HepG2 (cell line): ENCODE measurements at regions of chr2 and their contacts with region 1.

Region 1: GRCh38 chr2:209960676-209961630 is 41.5 kb upstream of the RPE start:
- DNase-seq: peak; percentile 67
- ATAC-seq: peak; percentile 98
- H3K4me3 ChIP-seq: no peak overlapping the region
- H3K27ac ChIP-seq: no peak overlapping the region
- H3K4me1 ChIP-seq: no peaks in the 10 kb centered on the region
- H3K27me3 ChIP-seq: 0 out of 5 replicates have a peak, but pooled peaks cover 0 to 12% of the 10 kb centered on the region in 2 experiments
- CTCF ChIP-seq: peak; percentile 85
- EP300 ChIP-seq: no peak
- POLR2A ChIP-seq: no peak
- RAD21 ChIP-seq: peak; percentile 45; the same call in 1 of the 2 replicates

Region 2: DNA sequence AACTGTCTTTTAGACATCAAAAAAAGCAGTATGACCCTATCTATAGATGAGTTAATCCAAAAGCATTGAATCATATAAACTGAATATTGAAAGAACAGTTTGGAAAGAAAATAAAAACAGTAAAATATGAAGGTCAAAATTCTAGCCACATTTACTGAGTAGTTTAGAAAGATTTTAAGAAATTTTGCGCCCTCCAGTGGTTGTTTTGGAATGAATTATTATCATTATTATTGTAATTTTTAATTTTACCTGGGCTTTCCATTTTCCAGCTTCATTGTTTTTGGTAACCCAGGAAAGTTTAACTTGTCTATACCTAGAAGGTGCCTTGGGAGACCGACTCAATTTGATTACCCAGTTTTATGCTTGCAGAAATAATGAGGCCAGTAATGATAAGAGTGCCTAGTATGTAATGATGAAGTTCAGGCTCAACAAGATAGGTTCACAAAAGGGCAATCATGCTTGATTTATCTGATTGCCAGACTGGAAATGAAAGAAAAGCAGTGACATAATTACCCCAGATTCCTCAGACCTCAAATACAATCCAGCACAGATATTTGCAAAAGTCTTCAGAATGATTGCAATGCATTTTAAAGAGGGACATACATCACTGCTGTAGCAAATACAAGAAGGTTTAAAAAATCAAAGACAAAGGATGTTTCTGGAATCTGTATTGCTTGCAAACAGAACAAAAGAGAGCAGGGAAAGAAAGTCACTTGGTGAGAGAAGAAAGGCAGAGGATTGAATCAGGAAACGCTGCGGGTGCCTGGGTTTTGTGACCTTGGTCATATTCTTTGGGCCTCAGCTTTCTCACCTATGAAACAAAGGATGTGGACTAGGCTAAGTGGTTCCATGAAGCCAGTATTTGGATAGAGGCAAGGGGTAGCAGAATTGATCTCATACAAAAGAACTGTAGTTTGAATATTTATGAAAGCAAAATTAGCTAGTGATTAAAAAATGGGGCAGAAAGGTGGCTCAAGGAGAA is 383.3 kb before region 1 on chr2:
- CTCF ChIA-PET with region 1: no interaction called
- POLR2A ChIA-PET with region 1: no interaction called
- in situ Hi-C with region 1: no loop called
- intact Hi-C with region 1: loop called (anchors 10 kb)
- DNase-seq: peak; percentile 10
- ATAC-seq: no peak
- H3K4me3 ChIP-seq: no peak overlapping the region
- H3K27ac ChIP-seq: no peak overlapping the region
- H3K4me1 ChIP-seq: no peaks in the 10 kb centered on the region
- H3K27me3 ChIP-seq: no peaks in the 10 kb centered on the region
- CTCF ChIP-seq: peak; percentile 24; the same call in 1 of the 2 replicates
- EP300 ChIP-seq: no peak
- POLR2A ChIP-seq: no peak
- RAD21 ChIP-seq: no peak

Region 3: DNA sequence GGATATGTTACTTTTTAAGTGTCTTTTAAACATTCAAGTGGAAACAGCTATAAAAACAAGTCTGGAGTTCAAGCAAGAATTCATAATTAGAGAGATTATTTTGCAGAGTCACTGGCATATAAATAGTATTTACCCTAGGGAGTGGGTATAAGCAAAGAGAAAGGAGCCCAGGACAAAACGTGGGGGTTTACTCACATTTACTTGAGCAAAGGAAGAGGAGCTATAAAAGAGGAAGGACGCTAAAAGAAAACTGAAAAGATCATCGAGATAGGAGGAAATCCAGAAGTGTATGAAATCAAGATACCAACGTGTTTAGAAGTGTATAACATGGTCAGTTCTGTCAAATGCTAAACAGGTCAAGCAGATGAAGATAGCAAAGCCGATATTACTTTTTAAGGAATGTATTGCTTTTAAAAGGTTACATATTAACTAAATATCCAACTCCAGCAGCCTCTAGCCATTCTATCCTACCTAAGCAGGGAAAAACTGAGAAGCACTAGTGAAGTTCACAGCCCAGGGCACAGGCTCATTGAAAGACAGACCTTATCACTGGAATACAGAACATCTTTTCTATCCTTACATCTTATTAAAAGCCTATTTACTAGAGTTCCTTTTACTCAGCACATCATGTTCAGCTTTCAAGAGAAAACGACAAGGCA is 201.6 kb after region 1 on chr2:
- CTCF ChIA-PET with region 1: no interaction called
- POLR2A ChIA-PET with region 1: no interaction called
- in situ Hi-C with region 1: no loop called
- intact Hi-C with region 1: no loop called
- DNase-seq: no peak
- ATAC-seq: peak; percentile 59; the same call in 2 of the 3 replicates
- H3K4me3 ChIP-seq: no peak overlapping the region
- H3K27ac ChIP-seq: no peak overlapping the region
- H3K4me1 ChIP-seq: peaks cover 10% of the 10 kb centered on the region
- H3K27me3 ChIP-seq: no peaks in the 10 kb centered on the region
- CTCF ChIP-seq: no peak
- EP300 ChIP-seq: no peak
- POLR2A ChIP-seq: no peak
- RAD21 ChIP-seq: no peak